ENCODE measurements at regions of chr12 and their contacts with region 1.

Region 1: GRCh38 chr12:96215919-96216273 is 21.7 kb downstream of the ELK3 start:
- DNase-seq: no peak
- ATAC-seq: no peak
- H3K4me3 ChIP-seq: no peak overlapping the region
- H3K4me3 Mint-ChIP-seq: no peak overlapping the region
- H3K27ac ChIP-seq: peak overlapping the region in 1 of 2 donors; percentile 20
- H3K27ac Mint-ChIP-seq: peak overlapping the region; percentile 1
- H3K4me1 ChIP-seq: peaks cover 41 to 45% of the 10 kb centered on the region in 2 donors
- H3K4me1 Mint-ChIP-seq: peaks cover 50% of the 10 kb centered on the region
- H3K27me3 ChIP-seq: no peaks in the 10 kb centered on the region
- H3K27me3 Mint-ChIP-seq: no peaks in the 10 kb centered on the region
- CTCF ChIP-seq: no peak

Region 2: DNA sequence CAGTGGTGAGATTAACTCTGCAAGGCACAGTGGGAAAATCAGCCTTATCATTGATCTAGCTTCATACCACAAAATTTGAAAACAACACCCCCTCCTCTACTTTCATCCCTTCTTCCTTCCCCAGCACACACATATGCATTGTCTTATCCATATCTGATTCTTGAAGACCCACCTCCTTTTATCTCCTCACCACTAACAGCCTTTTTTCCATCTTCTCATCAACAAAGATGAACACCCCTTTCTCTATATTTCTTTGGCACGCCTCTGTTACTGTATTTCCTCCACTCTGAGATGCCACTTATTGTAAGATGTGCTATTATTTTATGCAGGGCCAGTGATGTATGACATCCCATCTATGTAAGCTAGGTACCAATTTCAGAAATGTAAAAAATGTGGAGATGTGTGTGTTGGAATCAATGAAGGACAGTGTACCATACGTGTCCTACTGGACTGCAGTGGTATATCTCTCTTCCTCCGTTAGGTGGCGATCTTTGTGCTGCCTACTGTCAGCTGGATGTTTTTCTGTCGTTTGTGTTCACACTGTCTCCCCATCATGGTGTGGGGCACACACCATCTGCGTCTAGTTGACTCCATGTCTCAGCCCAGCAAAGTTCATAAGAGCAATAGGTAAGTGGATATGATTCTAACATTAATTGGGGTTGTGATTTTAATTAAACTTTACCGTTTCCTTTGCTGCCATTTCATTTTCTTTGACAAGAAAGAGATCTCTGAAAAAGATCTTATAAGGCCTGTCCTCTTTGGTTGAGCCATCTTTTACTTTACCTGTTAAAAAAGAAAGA is 297.5 kb before region 1 on chr12:
- CTCF ChIA-PET with region 1: interaction called, 20 read pairs
- POLR2A ChIA-PET with region 1: no interaction called
- intact Hi-C with region 1: loop called (anchors 1 kb)
- DNase-seq: peak; percentile 70
- ATAC-seq: peak; percentile 90
- H3K4me3 ChIP-seq: no peak overlapping the region
- H3K4me3 Mint-ChIP-seq: no peak overlapping the region
- H3K27ac ChIP-seq: no peak overlapping the region
- H3K27ac Mint-ChIP-seq: no peak overlapping the region
- H3K4me1 ChIP-seq: peaks cover 4% of the 10 kb centered on the region in 2 donors
- H3K4me1 Mint-ChIP-seq: no peaks in the 10 kb centered on the region
- H3K27me3 ChIP-seq: peaks cover 0 to 2% (median 0%) of the 10 kb centered on the region in 4 experiments
- H3K27me3 Mint-ChIP-seq: peaks cover 3% of the 10 kb centered on the region
- CTCF ChIP-seq: peak; percentile 88

Region 3: GRCh38 chr12:96007729-96008128 is 208.2 kb before region 1 on chr12:
- CTCF ChIA-PET with region 1: no interaction called
- POLR2A ChIA-PET with region 1: no interaction called
- intact Hi-C with region 1: no loop called
- DNase-seq: no peak
- ATAC-seq: no peak
- H3K4me3 ChIP-seq: no peak overlapping the region
- H3K4me3 Mint-ChIP-seq: no peak overlapping the region
- H3K27ac ChIP-seq: no peak overlapping the region
- H3K27ac Mint-ChIP-seq: no peak overlapping the region
- H3K4me1 ChIP-seq: no peaks in the 10 kb centered on the region
- H3K4me1 Mint-ChIP-seq: no peaks in the 10 kb centered on the region
- H3K27me3 ChIP-seq: no peaks in the 10 kb centered on the region
- H3K27me3 Mint-ChIP-seq: no peaks in the 10 kb centered on the region
- CTCF ChIP-seq: no peak

Region 4: GRCh38 chr12:96061864-96062453 is 153.9 kb before region 1 on chr12:
- CTCF ChIA-PET with region 1: interaction called, 200 read pairs
- POLR2A ChIA-PET with region 1: interaction called, 3 read pairs
- intact Hi-C with region 1: loop called (anchors 1 kb)
- DNase-seq: peak; percentile 91
- ATAC-seq: peak; percentile 97
- H3K4me3 ChIP-seq: peak overlapping the region in 1 of 5 experiments; percentile 38
- H3K4me3 Mint-ChIP-seq: peak overlapping the region; percentile 36
- H3K27ac ChIP-seq: peak overlapping the region; percentile 9 to 43
- H3K27ac Mint-ChIP-seq: peak overlapping the region; percentile 89
- H3K4me1 ChIP-seq: peaks cover 21 to 32% of the 10 kb centered on the region in 2 donors
- H3K4me1 Mint-ChIP-seq: peaks cover 25% of the 10 kb centered on the region
- H3K27me3 ChIP-seq: no peaks in the 10 kb centered on the region
- H3K27me3 Mint-ChIP-seq: no peaks in the 10 kb centered on the region
- CTCF ChIP-seq: peak; percentile 84

Region 5: DNA sequence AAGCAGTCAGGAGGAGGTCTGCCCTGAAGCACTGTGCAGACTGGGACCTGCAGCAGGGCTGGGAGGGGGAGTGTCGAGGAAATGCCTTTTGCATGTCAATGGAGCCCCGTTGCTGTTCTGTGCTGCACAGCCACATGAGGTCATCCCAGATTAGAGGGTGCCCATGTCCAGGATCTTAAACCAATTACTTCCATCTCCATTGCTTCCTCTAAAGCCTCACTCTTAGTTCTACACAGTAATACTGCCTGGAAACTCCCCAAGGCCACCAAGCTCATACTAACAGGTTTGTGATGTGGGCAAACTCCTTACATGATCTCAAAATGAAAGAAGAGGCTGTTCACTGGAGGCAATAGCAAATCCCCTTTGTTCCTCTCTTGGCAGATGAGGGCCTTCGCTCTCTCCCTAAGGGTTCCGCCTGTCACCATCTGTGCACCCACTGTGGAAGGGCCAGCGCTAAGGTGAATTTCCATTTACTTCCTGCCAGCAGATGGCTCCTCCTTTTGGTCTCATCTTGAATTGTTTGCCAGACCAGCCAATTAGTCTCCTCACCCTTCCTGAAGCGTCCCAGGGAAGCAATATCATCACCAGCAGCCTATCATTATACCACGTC is 145.1 kb before region 1 on chr12:
- CTCF ChIA-PET with region 1: interaction called, 56 read pairs
- POLR2A ChIA-PET with region 1: interaction called, 3 read pairs
- intact Hi-C with region 1: no loop called
- DNase-seq: peak; percentile 45
- ATAC-seq: peak; percentile 33
- H3K4me3 ChIP-seq: no peak overlapping the region
- H3K4me3 Mint-ChIP-seq: peak overlapping the region; percentile 32
- H3K27ac ChIP-seq: no peak overlapping the region
- H3K27ac Mint-ChIP-seq: peak overlapping the region; percentile 27
- H3K4me1 ChIP-seq: peaks cover 9 to 22% of the 10 kb centered on the region in 2 donors
- H3K4me1 Mint-ChIP-seq: peaks cover 24% of the 10 kb centered on the region
- H3K27me3 ChIP-seq: no peaks in the 10 kb centered on the region
- H3K27me3 Mint-ChIP-seq: no peaks in the 10 kb centered on the region
- CTCF ChIP-seq: no peak

Region 6: GRCh38 chr12:96132819-96133218 is 83.1 kb before region 1 on chr12:
- CTCF ChIA-PET with region 1: interaction called, 10 read pairs
- POLR2A ChIA-PET with region 1: interaction called, 5 read pairs
- intact Hi-C with region 1: no loop called
- DNase-seq: no peak
- ATAC-seq: peak; percentile 28
- H3K4me3 ChIP-seq: no peak overlapping the region
- H3K4me3 Mint-ChIP-seq: no peak overlapping the region
- H3K27ac ChIP-seq: no peak overlapping the region
- H3K27ac Mint-ChIP-seq: no peak overlapping the region
- H3K4me1 ChIP-seq: peaks cover 4 to 13% of the 10 kb centered on the region in 2 donors
- H3K4me1 Mint-ChIP-seq: peaks cover 16% of the 10 kb centered on the region
- H3K27me3 ChIP-seq: peaks cover 0 to 2% (median 0%) of the 10 kb centered on the region in 4 experiments
- H3K27me3 Mint-ChIP-seq: peaks cover 7% of the 10 kb centered on the region
- CTCF ChIP-seq: no peak

Region 7: GRCh38 chr12:96186607-96187301 is 29.1 kb before region 1 on chr12:
- CTCF ChIA-PET with region 1: interaction called, 13 read pairs
- POLR2A ChIA-PET with region 1: no interaction called
- intact Hi-C with region 1: loop called (anchors 1 kb)
- DNase-seq: no peak
- ATAC-seq: no peak
- H3K4me3 ChIP-seq: no peak overlapping the region
- H3K4me3 Mint-ChIP-seq: no peak overlapping the region
- H3K27ac ChIP-seq: no peak overlapping the region
- H3K27ac Mint-ChIP-seq: no peak overlapping the region
- H3K4me1 ChIP-seq: peaks cover 21 to 25% of the 10 kb centered on the region in 2 donors
- H3K4me1 Mint-ChIP-seq: peaks cover 38% of the 10 kb centered on the region
- H3K27me3 ChIP-seq: no peaks in the 10 kb centered on the region
- H3K27me3 Mint-ChIP-seq: no peaks in the 10 kb centered on the region
- CTCF ChIP-seq: no peak

Region 8: DNA sequence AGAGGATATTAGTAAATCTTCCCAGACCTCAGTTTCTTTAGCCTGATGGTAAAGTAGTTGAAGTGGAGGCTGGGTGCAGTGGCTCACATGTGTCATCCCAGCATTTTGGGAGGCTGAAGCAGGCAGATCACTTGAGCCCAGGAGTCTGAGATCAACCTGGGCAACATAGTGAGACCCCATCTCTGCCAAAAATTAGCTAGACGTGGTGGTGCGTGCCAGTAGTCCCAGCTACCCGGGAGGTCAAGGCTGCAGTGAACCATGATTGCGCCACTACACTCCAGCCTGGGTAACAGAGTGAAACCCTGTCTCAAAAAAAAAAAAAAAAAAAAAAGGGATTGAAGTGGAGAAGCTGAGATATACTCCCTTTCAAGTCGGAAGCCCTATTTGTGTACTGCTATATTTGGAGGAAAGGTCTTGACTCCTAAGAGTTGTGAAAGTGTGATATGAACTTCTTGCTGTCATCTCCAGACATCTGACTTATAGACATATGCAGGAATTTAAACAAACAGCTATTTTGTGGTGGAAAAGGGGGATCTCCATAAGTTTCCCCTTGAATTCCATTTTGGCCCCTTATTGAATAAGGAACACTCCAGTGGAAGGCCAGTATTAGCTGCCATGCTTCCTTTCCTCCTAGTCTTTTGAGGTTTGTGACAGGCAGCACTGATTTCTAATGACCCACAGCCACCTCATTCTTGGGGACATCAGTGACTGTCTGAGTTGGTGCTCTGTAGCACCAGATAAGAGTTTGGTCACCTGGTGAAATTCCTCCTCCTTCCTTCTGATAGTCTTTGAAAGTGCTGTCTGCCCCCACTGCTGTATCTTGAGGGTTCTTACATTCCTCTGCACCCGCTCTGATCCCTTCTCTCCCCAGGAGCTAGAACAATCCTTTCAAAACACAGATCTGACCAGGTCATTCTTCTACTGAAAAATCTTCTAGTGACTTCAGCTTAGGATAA is 14.3 kb before region 1 on chr12:
- CTCF ChIA-PET with region 1: interaction called, 8 read pairs
- POLR2A ChIA-PET with region 1: interaction called, 44 read pairs
- intact Hi-C with region 1: no loop called
- DNase-seq: no peak
- ATAC-seq: no peak
- H3K4me3 ChIP-seq: no peak overlapping the region
- H3K4me3 Mint-ChIP-seq: no peak overlapping the region
- H3K27ac ChIP-seq: peak overlapping the region in 1 of 2 donors; percentile 14
- H3K27ac Mint-ChIP-seq: peak overlapping the region; percentile 33
- H3K4me1 ChIP-seq: peaks cover 67 to 70% of the 10 kb centered on the region in 2 donors
- H3K4me1 Mint-ChIP-seq: peaks cover 77% of the 10 kb centered on the region
- H3K27me3 ChIP-seq: no peaks in the 10 kb centered on the region
- H3K27me3 Mint-ChIP-seq: no peaks in the 10 kb centered on the region
- CTCF ChIP-seq: no peak

Region 9: GRCh38 chr12:96343347-96343954 is 127.6 kb after region 1 on chr12:
- CTCF ChIA-PET with region 1: no interaction called
- POLR2A ChIA-PET with region 1: no interaction called
- intact Hi-C with region 1: no loop called
- DNase-seq: no peak
- ATAC-seq: no peak
- H3K4me3 ChIP-seq: no peak overlapping the region
- H3K4me3 Mint-ChIP-seq: no peak overlapping the region
- H3K27ac ChIP-seq: no peak overlapping the region
- H3K27ac Mint-ChIP-seq: peak overlapping the region; percentile 7
- H3K4me1 ChIP-seq: peaks cover 16 to 22% of the 10 kb centered on the region in 2 donors
- H3K4me1 Mint-ChIP-seq: peaks cover 44% of the 10 kb centered on the region
- H3K27me3 ChIP-seq: no peaks in the 10 kb centered on the region
- H3K27me3 Mint-ChIP-seq: no peaks in the 10 kb centered on the region
- CTCF ChIP-seq: no peak